ENCODE measurements at regions of chr9 and their contacts with region 1.

Region 1: GRCh38 chr9:78035383-78035993 is 3.9 kb upstream of the GNAQ start:
- DNase-seq: peak; percentile 61
- H3K4me3 ChIP-seq: no peak overlapping the region
- H3K27ac ChIP-seq: no peak overlapping the region
- H3K4me1 ChIP-seq: peaks cover 9% of the 10 kb centered on the region
- H3K27me3 ChIP-seq: no peaks in the 10 kb centered on the region
- CTCF ChIP-seq: peak; percentile 78 to 83

Region 2: GRCh38 chr9:77433675-77434445 is 601.6 kb before region 1 on chr9:
- CTCF ChIA-PET with region 1: no interaction called
- dilution Hi-C with region 1: no loop called
- in situ Hi-C with region 1: no loop called
- intact Hi-C with region 1: loop called (anchors 1 kb)
- DNase-seq: peak; percentile 36
- H3K4me3 ChIP-seq: no peak overlapping the region
- H3K27ac ChIP-seq: no peak overlapping the region
- H3K4me1 ChIP-seq: no peaks in the 10 kb centered on the region
- H3K27me3 ChIP-seq: no peaks in the 10 kb centered on the region
- CTCF ChIP-seq: peak; percentile 99

Region 3: DNA sequence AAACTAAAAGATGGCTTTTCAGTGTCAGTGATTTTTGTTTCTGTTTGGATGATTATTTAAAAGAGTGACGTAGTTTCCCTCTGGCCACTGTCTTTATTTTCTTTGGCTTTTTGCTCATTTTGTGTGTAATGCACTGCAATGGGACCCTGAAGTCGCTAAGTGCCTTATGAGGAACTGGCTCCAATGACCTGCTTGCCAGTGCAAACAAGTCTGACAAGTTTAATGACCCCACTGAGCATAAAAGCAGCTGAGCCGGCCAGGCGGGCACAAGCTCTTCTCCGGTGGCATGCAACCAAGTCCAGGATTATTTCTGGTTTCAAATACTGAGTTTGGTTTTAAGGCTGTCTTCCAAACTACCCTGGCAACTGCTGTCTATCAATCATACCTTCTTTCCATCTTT is 371.7 kb before region 1 on chr9:
- CTCF ChIA-PET with region 1: interaction called, 3 read pairs
- dilution Hi-C with region 1: no loop called
- in situ Hi-C with region 1: no loop called
- intact Hi-C with region 1: loop called (anchors 5 kb)
- DNase-seq: peak; percentile 8
- H3K4me3 ChIP-seq: no peak overlapping the region
- H3K27ac ChIP-seq: no peak overlapping the region
- H3K4me1 ChIP-seq: no peaks in the 10 kb centered on the region
- H3K27me3 ChIP-seq: no peaks in the 10 kb centered on the region
- CTCF ChIP-seq: no peak

Region 4: GRCh38 chr9:77807281-77807683 is 228.2 kb before region 1 on chr9:
- CTCF ChIA-PET with region 1: no interaction called
- dilution Hi-C with region 1: no loop called
- in situ Hi-C with region 1: no loop called
- intact Hi-C with region 1: loop called (anchors 10 kb)
- DNase-seq: peak; percentile 93
- H3K4me3 ChIP-seq: no peak overlapping the region
- H3K27ac ChIP-seq: peak overlapping the region; percentile 11
- H3K4me1 ChIP-seq: peaks cover 39% of the 10 kb centered on the region
- H3K27me3 ChIP-seq: no peaks in the 10 kb centered on the region
- CTCF ChIP-seq: no peak

Region 5: GRCh38 chr9:77884395-77884851 is 151.1 kb before region 1 on chr9:
- CTCF ChIA-PET with region 1: interaction called, 3 read pairs
- dilution Hi-C with region 1: no loop called
- in situ Hi-C with region 1: no loop called
- intact Hi-C with region 1: loop called (anchors 10 kb)
- DNase-seq: peak; percentile 70
- H3K4me3 ChIP-seq: peak overlapping the region in 2 of 3 experiments; percentile 5 to 36
- H3K27ac ChIP-seq: peak overlapping the region; percentile 54
- H3K4me1 ChIP-seq: peaks cover 39% of the 10 kb centered on the region
- H3K27me3 ChIP-seq: no peaks in the 10 kb centered on the region
- CTCF ChIP-seq: no peak

Region 6: DNA sequence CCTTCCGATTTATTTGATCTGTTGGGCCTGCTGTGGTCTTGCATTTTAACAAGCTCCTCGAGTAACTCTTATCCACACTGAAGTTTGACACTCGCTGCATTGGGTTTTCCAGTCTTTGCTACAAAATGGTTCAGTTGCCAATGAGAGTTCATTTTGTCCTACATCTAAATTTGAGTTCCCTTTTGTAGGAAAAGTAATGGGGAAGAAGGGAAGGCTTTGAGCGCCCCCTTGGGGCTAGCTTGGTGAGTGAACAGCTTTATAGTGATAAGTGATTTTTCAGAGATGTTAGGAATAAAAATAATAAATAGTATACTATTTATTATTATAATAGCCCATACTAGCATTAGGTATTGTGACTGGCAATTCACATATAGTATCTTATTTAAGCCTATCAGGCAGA is 86.0 kb after region 1 on chr9:
- CTCF ChIA-PET with region 1: no interaction called
- dilution Hi-C with region 1: no loop called
- in situ Hi-C with region 1: no loop called
- intact Hi-C with region 1: loop called (anchors 2 kb)
- DNase-seq: peak; percentile 54
- H3K4me3 ChIP-seq: no peak overlapping the region
- H3K27ac ChIP-seq: no peak overlapping the region
- H3K4me1 ChIP-seq: peaks cover 28% of the 10 kb centered on the region
- H3K27me3 ChIP-seq: no peaks in the 10 kb centered on the region
- CTCF ChIP-seq: peak; percentile 80

Region 7: DNA sequence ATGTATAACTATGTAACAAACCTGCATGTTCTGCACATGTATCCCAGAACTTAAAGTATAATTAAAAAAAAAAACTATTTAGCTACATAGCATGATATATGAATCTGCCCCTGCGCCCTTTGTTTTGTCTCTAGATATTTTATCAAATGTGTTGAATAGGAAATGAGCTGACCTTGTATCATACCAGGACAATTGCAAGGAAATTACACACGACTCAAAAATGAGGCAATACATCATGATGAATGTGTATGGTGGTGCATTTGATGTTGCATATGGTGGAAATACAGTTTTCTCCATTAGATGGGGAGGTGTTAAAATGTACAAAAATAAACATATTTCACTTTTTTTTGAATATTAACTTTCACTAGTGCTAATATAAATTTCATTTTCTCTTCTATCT is 171.8 kb after region 1 on chr9:
- CTCF ChIA-PET with region 1: no interaction called
- dilution Hi-C with region 1: no loop called
- in situ Hi-C with region 1: no loop called
- intact Hi-C with region 1: no loop called
- DNase-seq: no peak
- H3K4me3 ChIP-seq: no peak overlapping the region
- H3K27ac ChIP-seq: no peak overlapping the region
- H3K4me1 ChIP-seq: no peaks in the 10 kb centered on the region
- H3K27me3 ChIP-seq: peaks cover 13% of the 10 kb centered on the region
- CTCF ChIP-seq: no peak

Region 8: DNA sequence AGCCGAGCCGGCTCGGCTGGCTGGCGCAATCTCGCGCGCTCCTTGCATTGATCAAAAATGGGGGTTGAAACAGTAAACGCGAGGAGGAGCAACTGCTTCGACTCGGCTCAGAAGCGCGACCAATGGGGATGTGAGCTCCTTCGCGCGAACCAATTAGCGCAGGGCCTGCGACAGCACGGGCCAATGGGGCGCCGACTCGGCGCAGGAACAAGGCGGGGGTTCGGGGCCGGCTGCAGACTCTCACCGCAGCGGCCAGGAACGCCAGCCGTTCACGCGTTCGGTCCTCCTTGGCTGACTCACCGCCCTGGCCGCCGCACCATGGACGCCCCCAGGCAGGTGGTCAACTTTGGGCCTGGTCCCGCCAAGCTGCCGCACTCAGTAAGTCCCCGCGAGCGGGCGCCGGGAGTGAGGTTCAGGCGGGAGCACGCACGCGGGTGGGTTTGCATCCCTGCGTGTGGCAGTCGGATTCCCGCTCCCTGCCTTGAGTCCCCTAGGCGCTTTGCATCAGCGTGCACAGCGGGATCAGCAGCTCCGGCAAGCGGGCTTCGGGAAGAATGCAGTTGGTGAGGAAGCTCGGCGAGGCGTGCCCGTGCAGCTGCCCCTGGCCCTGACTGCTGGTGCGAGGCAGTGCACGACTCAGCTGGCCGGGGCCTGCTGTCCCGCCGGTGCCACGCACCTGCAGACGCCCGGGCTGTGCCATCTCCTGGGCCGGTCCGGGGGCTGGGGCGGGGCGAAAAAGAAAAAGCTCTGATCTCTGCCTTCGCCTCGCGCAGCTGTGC is 261.6 kb after region 1 on chr9 and contains the start of gene PSAT1:
- CTCF ChIA-PET with region 1: no interaction called
- dilution Hi-C with region 1: no loop called
- in situ Hi-C with region 1: no loop called
- intact Hi-C with region 1: loop called (anchors 10 kb)
- DNase-seq: peak; percentile 96
- H3K4me3 ChIP-seq: peak within 1 kb of the TSS; percentile 91 to 96 (median 93)
- H3K27ac ChIP-seq: peak within 1 kb of the TSS; percentile 84
- H3K4me1 ChIP-seq: peaks cover 17% of the 10 kb centered on the region
- H3K27me3 ChIP-seq: no peaks in the 10 kb centered on the region
- CTCF ChIP-seq: peak in 1 of 2 donors; percentile 32
- total RNA-seq, gene PSAT1: 220 to 369 TPM

Measured in mammary epithelial cell (primary cell).